GM12878 (cell line): ENCODE measurements at regions of chr7 and their contacts with region 1.

Region 1: GRCh38 chr7:17696443-17696842 is 243.9 kb downstream of the SNX13 start:
- DNase-seq: no peak
- ATAC-seq: no peak
- H3K4me3 ChIP-seq: no peak overlapping the region
- H3K27ac ChIP-seq: no peak overlapping the region
- H3K4me1 ChIP-seq: no peaks in the 10 kb centered on the region
- H3K27me3 ChIP-seq: no peaks in the 10 kb centered on the region
- CTCF ChIP-seq: no peak
- EP300 ChIP-seq: no peak
- POLR2A ChIP-seq: no peak
- RAD21 ChIP-seq: no peak

Region 2: GRCh38 chr7:17680943-17681351 is 15.5 kb before region 1 on chr7:
- CTCF ChIA-PET with region 1: interaction called, 15 read pairs
- POLR2A ChIA-PET with region 1: no interaction called
- RAD21 ChIA-PET with region 1: no interaction called
- SMC1A ChIA-PET with region 1: interaction called, 5 read pairs
- in situ Hi-C with region 1: no loop called
- intact Hi-C with region 1: no loop called
- DNase-seq: no peak
- ATAC-seq: peak; percentile 64; the same call in 2 of the 3 replicates
- H3K4me3 ChIP-seq: no peak overlapping the region
- H3K27ac ChIP-seq: no peak overlapping the region
- H3K4me1 ChIP-seq: no peaks in the 10 kb centered on the region
- H3K27me3 ChIP-seq: 0 out of 4 replicates have a peak, but pooled peaks cover 0 to 4% of the 10 kb centered on the region in 2 experiments
- CTCF ChIP-seq: peak in 2 of 3 experiments; percentile 40 to 44; a peak in 4 of 6 replicates
- EP300 ChIP-seq: no peak
- POLR2A ChIP-seq: no peak
- RAD21 ChIP-seq: peak; percentile 45